ENCODE measurements at regions of chr1 and their contacts with region 1.

Region 1: GRCh38 chr1:114737314-114737849 is 20.4 kb downstream of the CSDE1 start:
- DNase-seq: no peak
- ATAC-seq: no peak
- H3K4me3 ChIP-seq: no peak overlapping the region
- H3K27ac ChIP-seq: no peak overlapping the region
- H3K4me1 ChIP-seq: no peaks in the 10 kb centered on the region
- H3K27me3 ChIP-seq: no peaks in the 10 kb centered on the region
- CTCF ChIP-seq: no peak
- EP300 ChIP-seq: no peak
- POLR2A ChIP-seq: no peak
- RAD21 ChIP-seq: no peak

Region 2: GRCh38 chr1:113984710-113985109 is 752.7 kb before region 1 on chr1:
- CTCF ChIA-PET with region 1: no interaction called
- POLR2A ChIA-PET with region 1: no interaction called
- RAD21 ChIA-PET with region 1: no interaction called
- SMC1A ChIA-PET with region 1: no interaction called
- in situ Hi-C with region 1: no loop called
- intact Hi-C with region 1: no loop called
- DNase-seq: no peak
- ATAC-seq: no peak
- H3K4me3 ChIP-seq: no peak overlapping the region
- H3K27ac ChIP-seq: no peak overlapping the region
- H3K4me1 ChIP-seq: no peaks in the 10 kb centered on the region
- H3K27me3 ChIP-seq: no peaks in the 10 kb centered on the region
- CTCF ChIP-seq: no peak
- EP300 ChIP-seq: no peak
- POLR2A ChIP-seq: no peak
- RAD21 ChIP-seq: no peak

Region 3: GRCh38 chr1:114750780-114751179 is 13.4 kb after region 1 on chr1:
- CTCF ChIA-PET with region 1: interaction called, 14 read pairs
- POLR2A ChIA-PET with region 1: no interaction called
- RAD21 ChIA-PET with region 1: no interaction called
- SMC1A ChIA-PET with region 1: interaction called, 5 read pairs
- in situ Hi-C with region 1: no loop called
- intact Hi-C with region 1: no loop called
- DNase-seq: no peak
- ATAC-seq: no peak
- H3K4me3 ChIP-seq: no peak overlapping the region
- H3K27ac ChIP-seq: no peak overlapping the region
- H3K4me1 ChIP-seq: peaks cover 26% of the 10 kb centered on the region
- H3K27me3 ChIP-seq: no peaks in the 10 kb centered on the region
- CTCF ChIP-seq: no peak
- EP300 ChIP-seq: no peak
- POLR2A ChIP-seq: no peak
- RAD21 ChIP-seq: no peak

Measured in GM12878 (cell line).